A549 (cell line): ENCODE measurements at regions of chr16 and their contacts with region 1.

Region 1: GRCh38 chr16:85448557-85449197 is 164.4 kb upstream of the GSE1 start:
- DNase-seq: no peak
- ATAC-seq: no peak
- H3K4me3 ChIP-seq: no peak overlapping the region
- H3K27ac ChIP-seq: no peak overlapping the region
- H3K4me1 ChIP-seq: no peaks in the 10 kb centered on the region
- CTCF ChIP-seq: no peak
- EP300 ChIP-seq: no peak
- POLR2A ChIP-seq: no peak
- RAD21 ChIP-seq: no peak

Region 2: GRCh38 chr16:85220125-85220839 is 228.4 kb before region 1 on chr16:
- CTCF ChIA-PET with region 1: no interaction called
- POLR2A ChIA-PET with region 1: no interaction called
- DNase-seq: no peak
- ATAC-seq: peak in 1 of 2 experiments; percentile 33; a peak in 2 of 6 replicates
- H3K4me3 ChIP-seq: no peak overlapping the region
- H3K27ac ChIP-seq: peak overlapping the region in 1 of 2 experiments; percentile 57; a peak in 2 of 6 replicates
- H3K4me1 ChIP-seq: peaks cover 7% of the 10 kb centered on the region; the same call in 1 of the 3 replicates
- CTCF ChIP-seq: no peak
- EP300 ChIP-seq: no peak
- POLR2A ChIP-seq: no peak
- RAD21 ChIP-seq: no peak

Region 3: GRCh38 chr16:85381738-85382592 is 66.7 kb before region 1 on chr16:
- CTCF ChIA-PET with region 1: no interaction called
- POLR2A ChIA-PET with region 1: no interaction called
- DNase-seq: no peak
- ATAC-seq: no peak
- H3K4me3 ChIP-seq: no peak overlapping the region
- H3K27ac ChIP-seq: no peak overlapping the region
- H3K4me1 ChIP-seq: no peaks in the 10 kb centered on the region
- CTCF ChIP-seq: no peak
- EP300 ChIP-seq: no peak
- POLR2A ChIP-seq: no peak
- RAD21 ChIP-seq: no peak

Region 4: DNA sequence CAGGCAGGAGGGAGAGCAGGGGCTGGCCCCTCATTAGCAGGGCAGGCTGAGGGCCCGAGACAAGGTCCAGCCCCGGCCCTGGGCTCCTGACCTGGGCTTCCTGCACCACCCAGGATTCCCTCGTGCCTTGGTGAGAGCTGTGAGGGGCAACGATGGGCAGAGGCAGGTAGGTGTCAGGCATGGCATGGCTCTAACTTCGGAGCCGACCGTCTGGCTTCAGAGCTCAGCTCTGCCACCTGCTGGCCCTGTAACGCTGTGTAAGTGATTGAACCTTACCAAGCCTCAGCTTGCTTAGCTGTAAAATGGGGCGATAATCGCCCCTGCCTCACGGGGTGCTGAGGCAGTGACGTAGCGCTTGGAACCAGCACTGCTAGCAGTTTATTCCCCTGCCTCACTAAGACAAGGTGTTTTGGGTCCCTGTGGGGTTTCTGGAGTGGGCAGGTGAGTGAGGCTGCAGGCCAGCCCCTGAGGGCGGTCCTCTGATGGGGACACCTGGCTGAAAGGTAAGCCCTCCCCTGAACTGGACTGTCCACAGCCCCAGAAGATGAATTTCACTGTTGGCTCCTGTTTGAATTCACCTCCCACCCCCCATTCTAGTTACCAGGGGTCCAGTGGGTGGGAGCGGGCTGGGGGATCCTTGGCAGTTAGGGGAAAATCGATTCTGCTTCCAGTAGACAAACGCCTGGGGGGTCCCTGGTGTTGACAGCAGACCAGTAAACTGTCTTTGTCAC is 20.3 kb before region 1 on chr16:
- CTCF ChIA-PET with region 1: interaction called, 10 read pairs
- POLR2A ChIA-PET with region 1: no interaction called
- DNase-seq: peak; percentile 55 to 68
- ATAC-seq: peak; percentile 57 to 83; a peak in 5 of 6 replicates
- H3K4me3 ChIP-seq: no peak overlapping the region
- H3K27ac ChIP-seq: no peak overlapping the region
- H3K4me1 ChIP-seq: peaks cover 2% of the 10 kb centered on the region; the same call in 2 of the 3 replicates
- CTCF ChIP-seq: peak; percentile 67
- EP300 ChIP-seq: no peak
- POLR2A ChIP-seq: no peak
- RAD21 ChIP-seq: peak; percentile 53

Region 5: GRCh38 chr16:85461814-85462713 is 13.4 kb after region 1 on chr16:
- CTCF ChIA-PET with region 1: interaction called, 26 read pairs
- POLR2A ChIA-PET with region 1: no interaction called
- DNase-seq: no peak
- ATAC-seq: peak; percentile 27 to 61; a peak in 4 of 6 replicates
- H3K4me3 ChIP-seq: peak overlapping the region; percentile 37
- H3K27ac ChIP-seq: peak overlapping the region; percentile 13 to 87; a peak in 5 of 6 replicates
- H3K4me1 ChIP-seq: peaks cover 43% of the 10 kb centered on the region
- CTCF ChIP-seq: no peak
- EP300 ChIP-seq: no peak
- POLR2A ChIP-seq: no peak
- RAD21 ChIP-seq: no peak